HepG2 (cell line): ENCODE measurements at regions of chr7 and their contacts with region 1.

Region 1: DNA sequence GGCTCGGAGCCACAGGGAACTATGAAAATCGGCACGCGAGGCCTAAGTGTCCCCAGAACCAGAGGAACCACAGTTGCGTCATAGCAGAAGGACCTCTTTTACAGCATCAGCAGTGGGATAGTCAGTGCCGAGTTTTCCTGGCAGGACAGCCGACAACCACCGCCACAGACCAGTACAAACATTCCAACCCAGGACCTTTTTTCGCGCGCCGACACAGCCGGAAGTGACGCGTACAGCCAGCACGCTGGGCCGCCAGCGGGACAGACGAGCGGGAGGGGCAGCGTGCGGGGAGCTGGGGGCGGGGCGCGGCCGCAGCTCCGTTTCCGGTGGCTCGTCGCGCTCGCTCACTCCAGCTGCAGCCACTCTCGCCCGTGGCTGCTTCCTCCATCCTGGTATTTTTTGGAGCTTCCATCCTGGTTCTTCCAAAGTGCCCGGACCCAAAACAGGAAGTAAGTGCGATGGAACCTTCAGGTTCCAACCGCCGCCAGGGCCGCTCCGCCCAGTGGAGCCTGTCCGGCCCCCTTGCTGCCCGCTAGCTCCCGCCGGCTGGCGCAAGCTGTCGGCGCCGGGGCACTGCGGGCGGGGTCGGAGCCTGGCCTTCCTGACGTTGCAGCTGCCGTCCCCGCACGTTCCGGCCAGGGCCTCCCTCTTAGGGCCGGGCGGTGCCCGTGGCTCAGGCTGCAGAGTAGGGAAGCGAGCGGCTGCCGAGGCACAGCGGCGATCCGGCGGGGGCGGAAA is at the start of gene DMTF1:
- DNase-seq: peak; percentile 93
- ATAC-seq: peak; percentile 92
- H3K4me3 ChIP-seq: peak within 1 kb of the TSS; percentile 86 to 97 (median 91)
- H3K27ac ChIP-seq: peak within 1 kb of the TSS; percentile 98
- H3K4me1 ChIP-seq: peaks cover 46% of the 10 kb centered on the region
- H3K27me3 ChIP-seq: no peaks in the 10 kb centered on the region; a peak in 1 of 5 replicates
- CTCF ChIP-seq: no peak
- EP300 ChIP-seq: 0 out of 4 replicates have a peak, but pooled peaks have one; percentile 7 to 17
- POLR2A ChIP-seq: peak; percentile 82 to 93
- RAD21 ChIP-seq: no peak
- total RNA-seq, gene DMTF1: 17.9 and 45.8 TPM in 2 replicates

Region 2: GRCh38 chr7:86926732-86927131 is 225.5 kb before region 1 on chr7:
- CTCF ChIA-PET with region 1: interaction called, 7 read pairs
- POLR2A ChIA-PET with region 1: no interaction called
- in situ Hi-C with region 1: no loop called
- intact Hi-C with region 1: loop called (anchors 2 kb)
- DNase-seq: peak; percentile 28
- ATAC-seq: peak; percentile 46; the same call in 2 of the 3 replicates
- H3K4me3 ChIP-seq: no peak overlapping the region
- H3K27ac ChIP-seq: no peak overlapping the region
- H3K4me1 ChIP-seq: no peaks in the 10 kb centered on the region
- H3K27me3 ChIP-seq: no peaks in the 10 kb centered on the region
- CTCF ChIP-seq: peak; percentile 65
- EP300 ChIP-seq: no peak
- POLR2A ChIP-seq: no peak
- RAD21 ChIP-seq: no peak

Region 3: DNA sequence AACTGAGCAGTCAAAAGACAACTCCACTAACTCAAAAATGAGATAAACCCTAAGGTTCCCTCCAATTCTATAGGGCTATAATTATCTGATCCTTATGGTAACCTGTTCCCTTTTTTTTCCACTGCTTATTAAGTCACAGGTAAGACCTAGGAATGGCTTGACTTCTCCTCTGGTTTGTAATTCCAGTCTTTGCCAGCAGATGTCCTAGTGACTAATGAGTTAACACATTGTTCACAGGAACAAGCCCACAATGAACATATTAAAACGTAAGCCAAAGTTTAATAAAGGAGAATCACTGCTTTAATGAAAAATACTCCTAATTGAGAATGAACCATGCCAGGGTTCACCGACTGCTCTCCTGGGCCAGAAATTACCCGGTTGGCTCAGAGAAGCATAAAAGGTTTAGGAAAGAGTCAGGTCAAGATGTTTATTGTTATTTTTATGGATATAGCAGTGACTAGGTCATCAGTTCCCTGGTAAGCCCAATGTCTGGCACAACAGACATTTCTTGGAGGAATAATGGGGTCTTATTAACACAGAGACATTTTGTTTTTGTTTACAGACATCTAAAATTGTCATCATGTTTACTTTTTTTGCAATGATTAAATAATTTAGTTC is 213.0 kb before region 1 on chr7:
- CTCF ChIA-PET with region 1: interaction called, 12 read pairs
- POLR2A ChIA-PET with region 1: interaction called, 3 read pairs
- in situ Hi-C with region 1: loop called (anchors 5 kb)
- intact Hi-C with region 1: loop called (anchors 5 kb)
- DNase-seq: peak; percentile 67
- ATAC-seq: peak; percentile 84
- H3K4me3 ChIP-seq: no peak overlapping the region
- H3K27ac ChIP-seq: no peak overlapping the region
- H3K4me1 ChIP-seq: no peaks in the 10 kb centered on the region
- H3K27me3 ChIP-seq: no peaks in the 10 kb centered on the region
- CTCF ChIP-seq: peak; percentile 72
- EP300 ChIP-seq: no peak
- POLR2A ChIP-seq: no peak
- RAD21 ChIP-seq: peak; percentile 46; the same call in 1 of the 2 replicates

Region 4: GRCh38 chr7:86991093-86991769 is 161.0 kb before region 1 on chr7:
- CTCF ChIA-PET with region 1: no interaction called
- POLR2A ChIA-PET with region 1: no interaction called
- in situ Hi-C with region 1: no loop called
- intact Hi-C with region 1: no loop called
- DNase-seq: no peak
- ATAC-seq: no peak
- H3K4me3 ChIP-seq: no peak overlapping the region
- H3K27ac ChIP-seq: no peak overlapping the region
- H3K4me1 ChIP-seq: no peaks in the 10 kb centered on the region
- H3K27me3 ChIP-seq: no peaks in the 10 kb centered on the region
- CTCF ChIP-seq: no peak
- EP300 ChIP-seq: no peak
- POLR2A ChIP-seq: no peak
- RAD21 ChIP-seq: no peak

Region 5: GRCh38 chr7:87059525-87060287 is 92.6 kb before region 1 on chr7 and contains the start of gene ELAPOR2:
- CTCF ChIA-PET with region 1: no interaction called
- POLR2A ChIA-PET with region 1: interaction called, 3 read pairs
- in situ Hi-C with region 1: no loop called
- intact Hi-C with region 1: loop called (anchors 2 kb)
- DNase-seq: peak; percentile 32
- ATAC-seq: peak; percentile 99
- H3K4me3 ChIP-seq: peak within 1 kb of the TSS; percentile 53 to 76 (median 59); a peak in 5 of 6 replicates
- H3K27ac ChIP-seq: no peak within 1 kb of the TSS
- H3K4me1 ChIP-seq: peaks cover 14% of the 10 kb centered on the region
- H3K27me3 ChIP-seq: peaks cover 2 to 27% of the 10 kb centered on the region in 2 experiments; a peak in 3 of 5 replicates
- CTCF ChIP-seq: peak; percentile 66
- EP300 ChIP-seq: no peak
- POLR2A ChIP-seq: no peak
- RAD21 ChIP-seq: no peak
- total RNA-seq, gene ELAPOR2: 8.4 and 10.3 TPM in 2 replicates

Region 6: GRCh38 chr7:87219545-87220025 is 67.3 kb after region 1 on chr7 and contains the start of gene TMEM243:
- CTCF ChIA-PET with region 1: no interaction called
- POLR2A ChIA-PET with region 1: interaction called, 10 read pairs
- in situ Hi-C with region 1: no loop called
- intact Hi-C with region 1: loop called (anchors 1 kb)
- DNase-seq: peak; percentile 31
- ATAC-seq: peak; percentile 72
- H3K4me3 ChIP-seq: peak within 1 kb of the TSS; percentile 82 to 95 (median 89)
- H3K27ac ChIP-seq: peak within 1 kb of the TSS; percentile 55
- H3K4me1 ChIP-seq: peaks cover 41% of the 10 kb centered on the region
- H3K27me3 ChIP-seq: peaks cover 0 to 11% of the 10 kb centered on the region in 2 experiments; a peak in 2 of 5 replicates
- CTCF ChIP-seq: peak; percentile 40
- EP300 ChIP-seq: no peak
- POLR2A ChIP-seq: peak in 1 of 2 experiments; percentile 24; a peak in 2 of 4 replicates
- RAD21 ChIP-seq: no peak
- total RNA-seq, gene TMEM243: 25.1 and 31.2 TPM in 2 replicates

Region 7: DNA sequence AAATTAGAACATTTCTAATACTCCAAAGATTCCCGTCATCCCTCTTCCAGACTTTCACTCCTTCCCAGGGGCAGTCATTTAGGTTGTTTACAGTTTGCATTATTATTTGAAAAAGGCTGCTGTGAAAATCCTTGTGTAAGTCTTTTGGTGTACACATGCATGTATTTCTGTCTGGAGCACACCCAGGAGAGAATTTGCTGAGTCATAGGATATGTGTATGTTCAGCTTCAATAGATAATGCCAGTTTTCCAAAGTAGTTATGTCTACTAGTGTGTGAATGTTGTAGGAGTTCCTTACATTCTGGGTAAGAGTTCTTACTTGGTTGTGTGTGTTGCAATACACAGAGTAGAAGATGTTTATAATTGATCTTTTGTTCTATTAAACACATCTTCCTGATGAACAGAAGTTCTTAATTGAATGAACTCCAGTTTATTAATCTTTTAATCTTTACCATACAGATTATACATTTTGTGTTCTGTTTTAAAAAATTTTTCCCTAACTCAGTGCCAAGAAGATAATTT is 218.4 kb after region 1 on chr7:
- CTCF ChIA-PET with region 1: no interaction called
- POLR2A ChIA-PET with region 1: no interaction called
- in situ Hi-C with region 1: no loop called
- intact Hi-C with region 1: no loop called
- DNase-seq: peak; percentile 8
- ATAC-seq: no peak
- H3K4me3 ChIP-seq: no peak overlapping the region
- H3K27ac ChIP-seq: no peak overlapping the region
- H3K4me1 ChIP-seq: peaks cover 5% of the 10 kb centered on the region; the same call in 1 of the 2 replicates
- H3K27me3 ChIP-seq: no peaks in the 10 kb centered on the region
- CTCF ChIP-seq: no peak
- EP300 ChIP-seq: no peak
- POLR2A ChIP-seq: no peak
- RAD21 ChIP-seq: no peak